Sigmoid colon (tissue), 7 donors: ENCODE measurements at regions of chr10 and their contacts with region 1.

Region 1: GRCh38 chr10:23994479-23995046 is 214.4 kb upstream of the KIAA1217 start:
- DNase-seq: no peak
- H3K4me3 ChIP-seq: no peak overlapping the region
- H3K27ac ChIP-seq: no peak overlapping the region
- H3K4me1 ChIP-seq: no peaks in the 10 kb centered on the region
- H3K27me3 ChIP-seq: no peaks in the 10 kb centered on the region
- CTCF ChIP-seq: peak; percentile 26 to 82 (median 70)
- EP300 ChIP-seq: no peak
- POLR2A ChIP-seq: no peak

Region 2: GRCh38 chr10:24201503-24202180 is 207.1 kb after region 1 on chr10:
- intact Hi-C with region 1: loop called (anchors 1 kb)
- DNase-seq: no peak
- H3K4me3 ChIP-seq: no peak overlapping the region
- H3K27ac ChIP-seq: no peak overlapping the region
- H3K4me1 ChIP-seq: peaks cover 0 to 1% (median 0%) of the 10 kb centered on the region in 4 donors
- H3K27me3 ChIP-seq: no peaks in the 10 kb centered on the region
- CTCF ChIP-seq: no peak
- EP300 ChIP-seq: no peak
- POLR2A ChIP-seq: no peak

Region 3: DNA sequence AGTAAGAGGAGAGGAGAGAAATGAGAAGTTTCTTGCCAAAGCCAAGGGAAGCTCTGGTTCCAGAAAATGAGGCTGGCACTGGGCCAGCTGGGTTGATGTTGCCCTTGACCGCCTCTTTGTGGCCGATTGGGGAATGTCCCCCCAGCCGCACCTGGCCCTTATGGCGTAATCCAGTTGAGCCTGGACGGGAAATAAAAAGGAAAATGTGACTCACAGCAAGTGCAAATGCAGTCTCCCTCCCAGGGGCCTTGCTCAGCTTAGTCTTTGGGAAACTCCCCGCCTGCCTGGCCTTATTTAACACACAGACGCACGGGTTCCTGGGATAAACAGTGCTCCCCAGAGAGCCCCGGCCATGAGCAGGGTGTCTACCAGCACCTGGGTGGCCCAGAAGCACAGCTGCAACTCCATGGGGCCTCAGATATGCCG is 389.1 kb after region 1 on chr10:
- intact Hi-C with region 1: loop called (anchors 5 kb)
- DNase-seq: peak; percentile 94
- H3K4me3 ChIP-seq: no peak overlapping the region
- H3K27ac ChIP-seq: peak overlapping the region; percentile 37 to 65 (median 58)
- H3K4me1 ChIP-seq: peaks cover 0 to 14% (median 8%) of the 10 kb centered on the region in 4 donors
- H3K27me3 ChIP-seq: no peaks in the 10 kb centered on the region
- CTCF ChIP-seq: peak in 2 of 4 experiments; percentile 29 to 31
- EP300 ChIP-seq: peak in 2 of 4 donors; percentile 51 to 71
- POLR2A ChIP-seq: no peak

Region 4: GRCh38 chr10:24518981-24519597 is 524.5 kb after region 1 on chr10:
- intact Hi-C with region 1: loop called (anchors 2 kb)
- DNase-seq: peak; percentile 80
- H3K4me3 ChIP-seq: no peak overlapping the region
- H3K27ac ChIP-seq: no peak overlapping the region
- H3K4me1 ChIP-seq: peaks cover 0 to 9% (median 2%) of the 10 kb centered on the region in 4 donors
- H3K27me3 ChIP-seq: no peaks in the 10 kb centered on the region
- CTCF ChIP-seq: peak; percentile 31 to 71 (median 60)
- EP300 ChIP-seq: no peak
- POLR2A ChIP-seq: no peak